ENCODE measurements at regions of chrX and their contacts with region 1.

Region 1: GRCh38 chrX:153507484-153508178 is 9.8 kb upstream of the ATP2B3 start:
- DNase-seq: peak; percentile 86
- ATAC-seq: peak; percentile 56 to 86

Region 2: GRCh38 chrX:153032397-153033118 is 475.1 kb before region 1 on chrX:
- intact Hi-C with region 1: loop called in 1 of 2 experiments (anchors 5 kb)
- DNase-seq: peak; percentile 74
- ATAC-seq: peak; percentile 88 to 93

Region 3: GRCh38 chrX:153470435-153471363 is 36.9 kb before region 1 on chrX and contains the start of gene HAUS7:
- intact Hi-C with region 1: loop called in 1 of 2 experiments (anchors 5 kb)
- DNase-seq: peak; percentile 87
- ATAC-seq: peak; percentile 89 to 92
- total RNA-seq, gene HAUS7: 15.8 to 22.2 TPM

Measured in left cardiac atrium (tissue), 4 donors.